ENCODE measurements at regions of chr6 and their contacts with region 1.

Region 1: GRCh38 chr6:47780510-47781356 is 1.1 kb upstream of the OPN5 start:
- DNase-seq: peak; percentile 55
- ATAC-seq: peak; percentile 98
- H3K4me3 Mint-ChIP-seq: no peak overlapping the region
- H3K27ac Mint-ChIP-seq: no peak overlapping the region
- H3K4me1 Mint-ChIP-seq: peaks cover 7% of the 10 kb centered on the region
- H3K27me3 Mint-ChIP-seq: peaks cover 22% of the 10 kb centered on the region

Region 2: GRCh38 chr6:47646567-47647088 is 134.1 kb before region 1 on chr6:
- CTCF ChIA-PET with region 1: no interaction called
- POLR2A ChIA-PET with region 1: no interaction called
- DNase-seq: no peak
- ATAC-seq: no peak
- H3K4me3 Mint-ChIP-seq: no peak overlapping the region
- H3K27ac Mint-ChIP-seq: no peak overlapping the region
- H3K4me1 Mint-ChIP-seq: no peaks in the 10 kb centered on the region
- H3K27me3 Mint-ChIP-seq: peaks cover under 1% of the 10 kb centered on the region

Region 3: GRCh38 chr6:47733879-47734558 is 46.7 kb before region 1 on chr6:
- CTCF ChIA-PET with region 1: interaction called, 14 read pairs
- POLR2A ChIA-PET with region 1: no interaction called
- DNase-seq: no peak
- ATAC-seq: no peak
- H3K4me3 Mint-ChIP-seq: no peak overlapping the region
- H3K27ac Mint-ChIP-seq: no peak overlapping the region
- H3K4me1 Mint-ChIP-seq: peaks cover 3% of the 10 kb centered on the region
- H3K27me3 Mint-ChIP-seq: no peaks in the 10 kb centered on the region